ENCODE measurements at regions of chr6 and their contacts with region 1.

Region 1: DNA sequence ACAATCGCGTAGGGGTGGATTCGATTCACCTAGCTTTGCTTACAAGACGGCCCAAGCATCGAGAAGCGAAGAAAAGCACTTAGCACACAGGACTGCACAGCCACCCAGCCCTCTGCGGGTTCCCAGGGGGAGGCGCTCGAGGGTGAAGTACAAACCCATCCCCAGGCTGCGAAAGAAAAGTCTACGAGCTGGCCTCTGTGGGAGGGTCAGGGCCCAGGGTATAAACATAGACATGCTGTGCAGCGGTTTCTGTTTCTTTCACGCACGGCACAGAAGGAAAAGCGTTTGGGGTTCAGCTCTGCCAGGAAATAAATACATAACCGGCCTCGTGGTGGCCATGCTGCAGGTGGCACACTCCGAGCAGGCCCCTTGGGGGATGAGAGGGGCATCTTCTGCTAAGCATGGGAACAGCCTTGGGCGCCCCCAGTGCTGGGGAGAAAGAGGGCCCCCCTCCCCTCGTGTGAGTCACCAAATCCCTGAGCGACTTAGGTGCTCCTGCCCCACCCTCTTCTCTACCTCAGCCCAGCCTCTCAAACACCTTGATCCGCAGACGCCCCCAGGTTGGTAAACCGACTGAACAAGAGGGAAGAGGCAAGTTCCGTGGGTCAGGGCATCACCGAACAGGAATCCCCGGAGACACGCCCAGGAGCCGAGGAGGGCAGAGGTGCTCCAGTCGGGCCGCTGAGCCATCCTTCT is 91.6 kb upstream of the RIPOR2 start:
- DNase-seq: peak; percentile 46
- ATAC-seq: peak; percentile 91
- H3K4me3 Mint-ChIP-seq: no peak overlapping the region
- H3K27ac Mint-ChIP-seq: no peak overlapping the region
- H3K4me1 Mint-ChIP-seq: peaks cover 30% of the 10 kb centered on the region
- H3K27me3 Mint-ChIP-seq: no peaks in the 10 kb centered on the region
- CTCF ChIP-seq: no peak

Region 2: GRCh38 chr6:25061289-25061936 is 34.0 kb after region 1 on chr6:
- CTCF ChIA-PET with region 1: interaction called, 13 read pairs
- POLR2A ChIA-PET with region 1: interaction called, 3 read pairs
- DNase-seq: no peak
- ATAC-seq: peak; percentile 85
- H3K4me3 Mint-ChIP-seq: no peak overlapping the region
- H3K27ac Mint-ChIP-seq: peak overlapping the region; percentile 89
- H3K4me1 Mint-ChIP-seq: peaks cover 24% of the 10 kb centered on the region
- H3K27me3 Mint-ChIP-seq: no peaks in the 10 kb centered on the region
- CTCF ChIP-seq: no peak

Region 3: DNA sequence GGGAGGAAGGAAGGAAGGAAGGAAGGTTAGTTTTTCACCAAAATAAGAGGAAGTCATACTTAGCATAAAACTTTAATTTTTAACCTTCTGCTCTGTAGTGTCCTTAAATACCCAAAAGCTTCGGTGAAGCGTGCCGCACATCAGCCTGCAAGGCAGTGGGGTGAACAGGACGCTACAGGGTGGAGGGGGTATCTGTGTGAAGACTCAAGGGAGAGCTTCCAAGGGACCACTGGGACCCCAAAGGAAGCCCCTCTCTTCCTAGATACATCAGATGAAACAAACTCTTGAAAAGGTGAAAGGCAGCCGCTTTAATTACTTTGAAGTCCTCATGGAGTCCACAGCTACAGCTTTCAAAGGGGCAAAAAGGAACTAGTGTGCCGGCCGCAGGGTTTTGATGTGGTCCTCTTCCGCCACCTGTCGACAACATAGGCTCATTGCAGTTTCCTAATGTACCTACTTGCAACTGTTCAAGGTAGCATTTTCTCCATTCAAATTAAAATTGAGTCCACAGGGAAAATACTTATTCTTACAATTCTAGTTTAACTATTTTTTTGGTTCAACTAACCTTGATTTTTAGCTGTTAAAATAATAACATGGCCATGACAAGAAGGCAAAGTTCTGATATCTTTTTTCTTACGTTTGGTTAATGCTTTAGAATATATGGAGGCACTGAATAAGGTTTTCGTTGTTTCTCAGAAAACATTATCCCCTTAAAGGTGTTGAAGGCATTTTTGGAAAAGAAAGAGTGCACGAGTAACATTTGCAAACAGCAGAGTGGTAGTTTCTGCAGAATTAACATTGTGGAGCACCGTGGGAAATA is 43.4 kb after region 1 on chr6:
- CTCF ChIA-PET with region 1: interaction called, 19 read pairs
- POLR2A ChIA-PET with region 1: no interaction called
- DNase-seq: peak; percentile 78
- ATAC-seq: peak; percentile 85
- H3K4me3 Mint-ChIP-seq: peak overlapping the region; percentile 22; the same call in 1 of the 2 replicates
- H3K27ac Mint-ChIP-seq: no peak overlapping the region
- H3K4me1 Mint-ChIP-seq: no peaks in the 10 kb centered on the region
- H3K27me3 Mint-ChIP-seq: no peaks in the 10 kb centered on the region; the same call in 1 of the 2 replicates
- CTCF ChIP-seq: peak; percentile 90

Region 4: DNA sequence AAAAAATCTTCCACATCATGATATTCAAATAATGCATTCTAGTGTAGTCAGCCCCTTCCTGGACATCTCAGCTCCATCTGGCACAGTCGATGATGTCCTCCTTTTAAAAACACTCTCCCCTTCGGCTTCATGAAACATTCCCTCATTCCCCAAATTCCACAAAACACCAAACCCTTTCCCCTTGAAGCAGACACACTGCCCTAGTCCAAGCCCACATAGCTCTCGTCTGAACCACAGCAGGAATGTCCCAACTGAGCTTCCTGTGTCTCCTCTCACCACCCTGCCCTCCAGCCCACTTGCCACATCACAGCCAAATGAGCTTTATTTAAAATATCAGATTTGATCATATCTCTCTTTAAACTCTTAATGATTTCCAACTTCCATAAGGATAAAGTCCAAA is 145.4 kb after region 1 on chr6:
- CTCF ChIA-PET with region 1: no interaction called
- POLR2A ChIA-PET with region 1: interaction called, 18 read pairs
- DNase-seq: no peak
- ATAC-seq: no peak
- H3K4me3 Mint-ChIP-seq: no peak overlapping the region
- H3K27ac Mint-ChIP-seq: no peak overlapping the region; the same call in 1 of the 2 replicates
- H3K4me1 Mint-ChIP-seq: no peaks in the 10 kb centered on the region
- H3K27me3 Mint-ChIP-seq: no peaks in the 10 kb centered on the region; the same call in 1 of the 2 replicates
- CTCF ChIP-seq: no peak

Measured in WTC11 (cell line).